Activated B cell treated with CpG ODN at 0.5 μM for 24 hours (primary cell): ENCODE measurements at regions of chr7 and their contacts with region 1.

Region 1: GRCh38 chr7:26200444-26201246 is at the start of gene HNRNPA2B1:
- DNase-seq: peak; percentile 95
- ATAC-seq: peak; percentile 66
- H3K4me3 Mint-ChIP-seq: peak within 1 kb of the TSS; percentile 99
- H3K27ac Mint-ChIP-seq: peak within 1 kb of the TSS; percentile 100
- H3K4me1 Mint-ChIP-seq: peaks cover 55% of the 10 kb centered on the region
- H3K27me3 Mint-ChIP-seq: no peaks in the 10 kb centered on the region
- CTCF ChIP-seq: no peak
- total RNA-seq, gene HNRNPA2B1: 618 and 634 TPM in 2 replicates

Region 2: DNA sequence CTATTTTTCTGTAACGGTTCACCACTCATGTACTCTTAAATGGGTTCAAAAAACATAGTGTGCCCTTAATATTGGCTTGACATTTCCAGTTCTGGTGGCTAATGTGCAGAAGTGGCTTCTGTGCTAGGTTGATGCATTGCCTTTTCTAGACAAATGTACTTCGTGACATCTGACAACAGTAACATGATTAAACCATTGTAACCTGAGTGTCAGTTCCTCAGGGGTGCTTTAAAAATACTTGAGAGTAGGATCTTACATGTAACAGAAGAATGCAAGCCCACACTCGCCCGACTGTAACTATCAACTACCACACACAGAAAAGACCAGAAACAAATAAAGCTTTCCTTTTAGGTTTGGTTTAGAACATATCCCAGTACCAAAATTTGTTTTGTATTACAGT is 442.1 kb before region 1 on chr7:
- CTCF ChIA-PET with region 1: no interaction called
- POLR2A ChIA-PET with region 1: no interaction called
- intact Hi-C with region 1: no loop called
- DNase-seq: no peak
- ATAC-seq: no peak
- H3K4me3 Mint-ChIP-seq: no peak overlapping the region
- H3K27ac Mint-ChIP-seq: no peak overlapping the region
- H3K4me1 Mint-ChIP-seq: no peaks in the 10 kb centered on the region
- H3K27me3 Mint-ChIP-seq: peaks cover 11% of the 10 kb centered on the region
- CTCF ChIP-seq: no peak

Region 3: DNA sequence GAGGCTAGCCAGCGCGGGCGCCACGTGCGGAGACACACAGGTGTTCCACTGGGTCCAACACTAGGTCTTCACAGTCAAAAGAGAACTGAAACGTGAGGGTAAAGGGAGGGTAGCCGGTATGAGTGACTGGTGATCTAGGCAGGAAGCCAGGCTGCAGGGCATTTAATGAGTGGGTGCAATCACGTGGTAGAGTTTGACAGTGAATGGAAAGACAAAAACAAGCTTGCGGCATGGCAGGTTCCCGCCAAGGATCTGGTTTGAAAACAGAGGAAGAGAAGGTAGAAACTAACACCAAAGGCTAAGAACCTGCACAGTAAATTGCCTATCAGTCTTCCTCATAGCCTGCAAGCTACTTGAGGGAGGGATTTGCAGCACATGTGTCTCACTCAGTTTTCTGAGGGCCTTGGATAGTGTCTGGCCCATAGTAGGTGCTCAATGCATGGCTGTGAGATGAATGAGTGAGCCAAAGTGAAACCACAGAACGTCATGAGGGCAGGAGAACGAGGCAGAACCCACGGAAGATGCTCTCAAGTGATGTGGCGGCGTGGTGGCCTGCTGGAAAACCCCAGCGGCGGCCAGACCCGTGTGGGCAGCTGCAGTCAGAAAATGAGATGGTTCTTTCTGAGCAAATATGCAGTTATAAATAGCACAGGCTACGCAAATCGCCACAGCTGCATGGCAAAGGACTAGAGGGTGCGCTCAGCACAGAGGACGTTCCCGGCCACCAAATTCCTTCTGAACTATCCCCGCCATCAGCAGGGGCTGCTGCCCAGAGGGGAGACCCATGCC is 232.2 kb before region 1 on chr7:
- CTCF ChIA-PET with region 1: no interaction called
- POLR2A ChIA-PET with region 1: interaction called, 22 read pairs
- intact Hi-C with region 1: loop called (anchors 1 kb)
- DNase-seq: peak; percentile 58
- ATAC-seq: peak; percentile 74
- H3K4me3 Mint-ChIP-seq: peak overlapping the region; percentile 58
- H3K27ac Mint-ChIP-seq: peak overlapping the region; percentile 97
- H3K4me1 Mint-ChIP-seq: peaks cover 48% of the 10 kb centered on the region
- H3K27me3 Mint-ChIP-seq: peaks cover 4% of the 10 kb centered on the region
- CTCF ChIP-seq: no peak

Region 4: DNA sequence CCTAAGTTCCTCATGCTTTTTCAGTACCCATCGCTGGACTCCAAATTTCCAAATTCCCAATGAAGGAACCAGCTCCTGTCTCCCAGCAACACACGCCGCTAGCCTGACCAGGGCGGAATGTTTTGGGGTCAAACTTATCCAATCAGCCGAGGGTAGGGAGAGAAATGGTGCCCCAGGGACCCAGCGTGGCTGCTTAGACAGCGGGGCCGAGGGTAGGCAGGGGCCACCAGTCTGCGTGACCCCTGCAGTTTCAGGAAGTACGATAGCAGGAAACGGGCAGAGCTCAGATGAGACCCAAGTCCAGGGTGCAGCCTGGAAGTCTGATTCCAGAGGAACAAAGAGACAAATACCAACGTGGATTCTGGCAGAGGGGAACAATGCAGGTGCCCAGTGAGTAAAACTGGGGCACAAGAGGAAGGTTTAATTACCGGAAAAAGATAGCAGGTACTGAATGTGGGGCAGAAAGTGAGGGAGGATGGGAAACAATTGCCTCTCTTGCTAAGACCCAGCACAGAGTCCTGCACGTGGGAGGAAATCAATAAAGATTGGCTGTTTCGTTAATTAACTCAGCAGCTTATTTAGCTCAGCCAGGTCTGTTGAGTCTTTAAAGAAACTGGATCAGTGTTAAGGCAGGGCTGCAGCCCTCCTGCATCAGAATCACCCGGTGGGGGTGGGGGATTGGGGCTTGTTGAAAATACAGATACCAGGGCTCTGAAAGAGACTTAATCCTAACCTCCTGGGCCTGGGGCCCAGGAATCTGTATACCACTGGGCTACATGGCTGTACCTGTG is 99.1 kb before region 1 on chr7:
- CTCF ChIA-PET with region 1: interaction called, 9 read pairs
- POLR2A ChIA-PET with region 1: interaction called, 59 read pairs
- intact Hi-C with region 1: loop called (anchors 2 kb)
- DNase-seq: peak; percentile 35
- ATAC-seq: peak; percentile 76
- H3K4me3 Mint-ChIP-seq: peak overlapping the region; percentile 92
- H3K27ac Mint-ChIP-seq: peak overlapping the region; percentile 95
- H3K4me1 Mint-ChIP-seq: peaks cover 49% of the 10 kb centered on the region
- H3K27me3 Mint-ChIP-seq: no peaks in the 10 kb centered on the region
- CTCF ChIP-seq: no peak

Region 5: DNA sequence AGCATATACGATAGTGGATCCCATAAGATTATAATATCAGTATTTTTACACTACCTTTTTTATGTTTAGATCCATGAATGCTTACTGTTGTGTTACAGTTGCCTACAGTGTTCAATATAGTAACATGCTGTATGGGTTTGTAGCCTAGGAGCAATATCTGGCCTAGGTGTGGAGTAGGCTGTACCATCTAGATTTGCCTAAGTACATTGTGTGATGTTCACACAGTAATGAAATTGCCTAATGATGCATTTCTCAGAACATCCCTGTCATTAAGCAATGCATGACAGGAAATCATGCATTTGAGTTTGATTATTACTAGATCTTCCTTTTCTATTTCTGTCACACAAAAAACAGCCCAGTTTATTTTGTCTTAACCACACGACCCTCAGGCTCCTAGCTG is 15.4 kb after region 1 on chr7:
- CTCF ChIA-PET with region 1: interaction called, 3 read pairs
- POLR2A ChIA-PET with region 1: interaction called, 11 read pairs
- intact Hi-C with region 1: no loop called
- DNase-seq: no peak
- ATAC-seq: no peak
- H3K4me3 Mint-ChIP-seq: no peak overlapping the region
- H3K27ac Mint-ChIP-seq: no peak overlapping the region
- H3K4me1 Mint-ChIP-seq: peaks cover 11% of the 10 kb centered on the region
- H3K27me3 Mint-ChIP-seq: no peaks in the 10 kb centered on the region
- CTCF ChIP-seq: no peak

Region 6: DNA sequence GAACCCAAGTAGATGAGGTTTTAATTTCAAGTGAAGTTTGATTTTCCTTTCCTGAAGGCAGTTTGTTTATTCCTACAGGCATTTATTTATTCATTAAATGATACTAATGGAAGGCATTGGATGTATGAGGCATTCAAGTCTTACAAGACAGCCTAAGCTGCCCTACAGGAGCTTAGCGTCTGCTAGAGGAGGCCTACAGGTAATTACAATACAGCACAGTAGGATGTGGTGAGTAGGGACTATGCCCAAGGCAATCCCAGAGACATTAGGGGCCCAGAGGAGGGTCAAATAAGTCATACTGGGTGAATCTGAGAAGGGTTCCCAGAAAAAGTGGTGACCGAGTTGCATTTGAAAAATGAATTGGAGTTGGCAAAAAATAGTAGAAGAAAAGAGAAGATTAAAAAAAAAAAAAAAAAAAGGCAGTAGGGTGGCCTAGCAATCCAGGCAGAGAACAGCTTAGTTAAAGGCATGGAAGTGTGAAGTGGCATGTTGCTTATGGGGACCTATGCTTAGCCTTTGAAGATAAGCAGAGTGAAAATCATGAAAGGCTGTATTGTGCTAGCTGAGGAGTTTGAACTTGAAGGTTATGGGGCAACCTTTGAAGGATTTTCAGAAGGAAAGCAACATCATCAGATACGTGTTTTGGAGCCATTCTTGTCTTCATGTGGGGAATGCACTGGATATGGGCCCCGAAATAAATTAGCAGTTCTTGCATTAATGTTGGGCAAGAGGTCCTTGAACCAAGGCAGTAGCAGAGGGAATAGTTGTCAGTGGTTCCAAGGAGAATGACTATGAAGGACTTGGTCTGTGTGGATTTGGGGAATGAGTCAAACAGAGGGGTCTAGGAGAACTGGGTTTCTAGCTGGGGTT is 156.5 kb after region 1 on chr7:
- CTCF ChIA-PET with region 1: interaction called, 35 read pairs
- POLR2A ChIA-PET with region 1: interaction called, 25 read pairs
- intact Hi-C with region 1: no loop called
- DNase-seq: no peak
- ATAC-seq: no peak
- H3K4me3 Mint-ChIP-seq: no peak overlapping the region
- H3K27ac Mint-ChIP-seq: peak overlapping the region; percentile 46
- H3K4me1 Mint-ChIP-seq: peaks cover 48% of the 10 kb centered on the region
- H3K27me3 Mint-ChIP-seq: no peaks in the 10 kb centered on the region
- CTCF ChIP-seq: no peak

Region 7: DNA sequence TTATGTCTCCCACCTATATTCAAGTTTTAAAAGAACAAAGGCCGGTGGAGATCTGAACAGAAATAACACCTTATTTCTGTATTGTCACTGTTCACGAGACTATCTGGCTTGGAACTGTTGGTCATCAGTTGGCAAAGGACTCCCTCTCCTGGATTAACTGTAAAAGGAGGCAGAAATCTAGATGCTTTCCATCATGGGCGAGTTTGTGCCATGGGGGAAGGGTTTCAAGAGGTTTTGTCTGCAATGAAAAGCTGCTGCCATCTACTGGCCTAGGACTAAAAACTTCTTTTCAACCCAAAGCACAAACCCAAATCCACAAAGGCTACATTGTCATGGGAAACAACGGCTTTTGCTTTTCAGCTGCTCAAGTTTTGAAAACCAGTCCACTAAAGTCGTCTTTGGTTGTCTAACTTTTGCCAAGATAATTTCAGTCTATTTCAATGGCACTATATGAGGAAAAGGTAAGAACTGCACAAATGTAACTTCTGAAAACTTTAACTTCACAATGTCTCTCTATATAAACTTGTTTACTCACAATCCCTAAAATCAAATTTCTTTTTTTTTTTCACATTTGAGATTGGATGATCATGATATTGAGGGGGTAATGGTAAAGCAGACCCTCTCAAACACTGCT is 467.0 kb after region 1 on chr7:
- CTCF ChIA-PET with region 1: no interaction called
- POLR2A ChIA-PET with region 1: interaction called, 3 read pairs
- intact Hi-C with region 1: loop called (anchors 5 kb)
- DNase-seq: no peak
- ATAC-seq: peak; percentile 60
- H3K4me3 Mint-ChIP-seq: no peak overlapping the region
- H3K27ac Mint-ChIP-seq: no peak overlapping the region
- H3K4me1 Mint-ChIP-seq: peaks cover 18% of the 10 kb centered on the region
- H3K27me3 Mint-ChIP-seq: no peaks in the 10 kb centered on the region
- CTCF ChIP-seq: no peak

Region 8: GRCh38 chr7:28155019-28155660 is 1954.5 kb after region 1 on chr7:
- CTCF ChIA-PET with region 1: no interaction called
- POLR2A ChIA-PET with region 1: no interaction called
- intact Hi-C with region 1: loop called (anchors 2 kb)
- DNase-seq: no peak
- ATAC-seq: peak; percentile 68
- H3K4me3 Mint-ChIP-seq: peak overlapping the region; percentile 68
- H3K27ac Mint-ChIP-seq: peak overlapping the region; percentile 94
- H3K4me1 Mint-ChIP-seq: peaks cover 95% of the 10 kb centered on the region
- H3K27me3 Mint-ChIP-seq: no peaks in the 10 kb centered on the region
- CTCF ChIP-seq: no peak